ENCODE measurements at regions of chr5 and their contacts with region 1.

Region 1: DNA sequence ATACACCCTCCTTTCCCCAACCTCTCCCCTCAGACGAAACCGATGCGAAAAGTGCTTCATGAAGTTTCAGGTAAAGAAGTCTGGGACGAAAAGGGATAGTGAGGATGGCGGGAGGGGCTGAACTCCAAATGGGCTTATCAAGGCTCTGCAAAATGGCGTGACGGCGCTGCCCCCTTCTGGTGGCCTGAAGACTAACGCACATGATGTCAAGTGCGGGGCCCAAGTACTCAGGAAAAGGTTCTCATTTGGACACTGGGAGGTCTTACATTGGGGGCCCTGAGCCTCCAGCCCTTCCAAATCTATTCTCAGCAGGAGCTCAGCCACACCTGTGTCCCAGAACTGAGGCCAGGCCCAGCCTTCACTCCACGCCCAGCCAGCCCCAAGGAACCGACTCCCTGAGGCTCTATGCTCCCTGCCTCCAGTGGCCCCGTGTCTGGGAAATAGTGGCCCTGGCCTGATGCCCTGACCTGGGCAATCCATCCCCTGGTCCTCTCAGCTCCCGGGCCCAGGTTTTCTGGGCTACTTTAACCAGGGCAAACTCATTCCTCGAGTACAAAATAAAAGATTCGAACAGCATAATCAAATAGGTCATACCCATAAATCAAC is 119.9 kb downstream of the KCNIP1 start:
- DNase-seq: peak; percentile 13
- H3K4me3 ChIP-seq: no peak overlapping the region
- H3K27ac ChIP-seq: no peak overlapping the region
- H3K27me3 ChIP-seq: no peaks in the 10 kb centered on the region
- CTCF ChIP-seq: peak; percentile 72

Region 2: DNA sequence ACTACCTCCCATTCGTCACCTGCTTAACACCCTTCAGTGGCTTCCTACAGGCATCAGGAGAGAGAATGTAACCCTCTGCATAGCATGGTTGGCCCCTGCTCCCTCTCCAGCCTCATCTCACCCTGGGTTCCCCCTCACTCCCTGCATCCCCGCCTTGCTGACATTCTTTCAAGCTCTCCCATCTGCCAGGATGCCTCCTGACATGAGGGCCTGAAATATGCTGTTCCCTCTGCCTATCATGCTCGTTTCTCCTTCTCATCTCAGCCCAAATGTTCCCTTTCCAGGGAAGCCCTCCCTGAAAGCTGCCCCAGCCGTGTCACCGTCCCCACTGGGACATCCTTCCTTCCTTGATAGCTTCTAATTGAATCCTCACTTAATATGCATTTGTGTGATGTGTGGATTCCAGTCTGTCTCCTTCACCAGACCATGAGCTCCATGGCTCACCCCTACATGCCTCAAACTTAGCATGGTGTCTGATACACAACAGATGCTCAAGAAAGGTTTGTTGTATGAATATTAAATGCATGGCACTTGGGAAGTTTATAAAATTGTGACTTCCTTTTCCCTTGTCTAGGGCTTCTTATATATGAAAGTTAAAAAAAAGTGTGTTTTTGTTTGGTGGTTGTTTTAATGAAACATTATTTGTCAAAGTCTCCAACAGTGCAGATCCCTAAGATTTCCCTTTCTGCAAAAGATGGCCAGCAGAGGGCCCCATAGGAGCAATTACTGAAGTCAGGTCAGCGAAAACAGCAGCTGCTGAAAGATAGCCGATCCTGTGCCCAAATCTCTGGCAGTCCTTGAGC is 398.2 kb before region 1 on chr5:
- CTCF ChIA-PET with region 1: interaction called, 10 read pairs
- POLR2A ChIA-PET with region 1: no interaction called
- DNase-seq: no peak
- H3K4me3 ChIP-seq: no peak overlapping the region
- H3K27ac ChIP-seq: no peak overlapping the region
- H3K27me3 ChIP-seq: no peaks in the 10 kb centered on the region
- CTCF ChIP-seq: peak; percentile 71